K562 (cell line): ENCODE measurements at regions of chr7 and their contacts with region 1.

Region 1: DNA sequence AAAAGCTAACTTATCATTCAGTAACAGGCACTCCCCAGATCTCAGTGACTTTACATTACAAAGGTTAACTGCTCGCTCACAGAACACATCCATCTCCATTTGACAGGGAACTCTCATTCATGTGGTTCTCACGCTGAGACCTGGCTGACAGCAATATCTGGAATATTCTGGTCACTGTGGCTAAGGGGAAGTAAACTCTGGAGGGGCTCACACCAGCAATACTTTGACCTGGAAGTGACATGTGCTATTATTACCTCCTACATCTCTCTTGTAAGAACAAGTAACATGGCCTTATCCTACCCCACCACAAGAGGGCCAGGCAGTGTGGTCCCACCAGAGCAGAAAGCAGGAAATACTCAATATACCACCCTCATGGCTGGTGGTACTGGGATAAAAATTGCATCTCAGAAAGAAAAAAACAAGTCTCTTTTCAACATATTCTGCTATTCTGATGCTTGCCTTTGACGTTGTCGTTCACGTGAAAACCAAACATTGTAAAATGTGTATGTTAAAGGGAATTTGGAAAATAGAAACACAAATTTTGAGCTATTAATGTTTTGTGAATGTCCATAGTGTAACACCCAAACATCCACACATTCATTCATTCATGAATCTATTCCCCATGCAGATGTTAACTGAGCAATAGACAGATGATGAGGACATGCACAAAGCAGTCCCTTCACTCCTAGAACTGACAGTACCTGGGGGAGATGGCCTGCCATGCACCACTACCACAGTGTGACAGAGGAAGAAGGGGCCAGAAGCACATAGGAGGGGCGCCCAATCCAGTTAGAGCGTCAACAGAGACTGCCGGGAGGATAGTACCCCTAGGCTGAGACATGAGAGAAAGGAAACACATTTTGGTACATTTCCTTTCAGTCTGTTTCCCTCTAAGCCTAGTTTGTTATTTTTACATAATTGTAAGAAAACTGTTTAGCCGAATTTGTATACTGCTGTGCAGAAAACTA is 166.0 kb upstream of the SP4 start:
- DNase-seq: peak; percentile 22 to 56 (median 32)
- ATAC-seq: peak; percentile 98
- H3K4me3 ChIP-seq: no peak overlapping the region
- H3K27ac ChIP-seq: no peak overlapping the region
- H3K4me1 ChIP-seq: no peaks in the 10 kb centered on the region
- H3K27me3 ChIP-seq: no peaks in the 10 kb centered on the region
- CTCF ChIP-seq: peak; percentile 66 to 71 (median 67)
- EP300 ChIP-seq: no peak
- POLR2A ChIP-seq: no peak
- RAD21 ChIP-seq: peak; percentile 41 to 72; a peak in 3 of 4 replicates

Region 2: DNA sequence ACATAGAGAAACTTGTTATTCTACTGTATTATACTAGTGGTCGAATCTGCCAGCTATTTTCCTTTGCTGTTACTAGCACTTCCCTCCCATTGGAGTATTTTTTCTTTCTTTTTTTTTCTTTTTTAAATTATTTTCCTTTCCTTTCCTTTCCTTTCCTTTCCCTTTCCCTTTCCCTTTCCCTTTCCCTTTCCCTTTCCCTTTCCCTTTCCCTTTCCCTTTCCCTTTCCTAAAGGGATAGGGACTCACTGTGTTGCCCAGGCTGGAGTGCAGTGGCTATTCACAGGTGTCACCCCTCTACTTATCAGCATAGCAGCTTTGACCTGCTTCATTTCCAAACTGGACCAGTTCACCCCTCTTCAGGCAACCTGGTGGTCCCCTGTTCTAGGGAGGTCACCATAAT is 46.6 kb before region 1 on chr7:
- CTCF ChIA-PET with region 1: no interaction called
- POLR2A ChIA-PET with region 1: no interaction called
- in situ Hi-C with region 1: no loop called
- intact Hi-C with region 1: no loop called
- DNase-seq: no peak
- ATAC-seq: no peak
- H3K4me3 ChIP-seq: no peak overlapping the region
- H3K27ac ChIP-seq: no peak overlapping the region
- H3K4me1 ChIP-seq: no peaks in the 10 kb centered on the region
- H3K27me3 ChIP-seq: peaks cover 0 to 2% of the 10 kb centered on the region in 2 experiments; a peak in 2 of 5 replicates
- CTCF ChIP-seq: no peak
- EP300 ChIP-seq: no peak
- POLR2A ChIP-seq: no peak
- RAD21 ChIP-seq: no peak

Region 3: DNA sequence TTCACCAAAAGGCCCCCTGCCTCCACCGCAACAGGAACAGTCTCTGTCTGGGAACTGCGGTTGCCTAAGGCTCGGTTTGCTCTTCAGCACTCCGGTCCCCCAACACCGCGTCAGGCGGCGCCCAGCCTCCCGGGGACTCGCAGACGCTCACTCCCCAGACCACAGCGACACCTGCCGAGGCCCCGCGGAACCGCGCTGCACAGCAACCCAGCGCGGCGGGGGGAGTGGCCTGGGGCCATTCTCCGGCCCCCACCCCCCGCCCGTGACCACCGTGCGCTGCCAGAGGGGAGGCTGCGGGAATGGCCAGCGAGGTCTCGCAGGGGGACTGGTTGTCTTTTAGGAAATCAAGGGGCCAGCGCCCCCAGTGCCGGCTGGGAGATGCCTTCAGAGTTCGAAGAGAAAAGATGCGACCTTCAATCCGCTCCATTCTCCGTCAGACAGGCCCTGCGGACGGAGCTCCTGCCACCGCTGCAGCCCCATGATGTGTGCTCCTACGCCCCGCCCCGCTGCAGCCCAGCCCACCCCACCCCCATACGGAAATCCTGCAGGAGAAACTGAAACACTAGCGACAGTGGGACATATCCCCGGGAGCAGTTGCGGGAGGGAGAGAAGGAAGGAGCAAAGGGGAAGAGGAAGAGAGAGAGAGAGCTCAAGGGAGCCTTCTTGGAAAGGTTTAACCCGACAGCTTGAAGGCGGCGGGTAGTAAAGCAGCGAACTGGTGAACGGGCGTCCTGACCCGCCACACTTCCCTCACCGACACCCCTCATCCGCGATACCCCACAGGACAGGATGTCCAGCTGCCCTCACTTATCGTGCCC is 821.2 kb after region 1 on chr7:
- CTCF ChIA-PET with region 1: no interaction called
- POLR2A ChIA-PET with region 1: no interaction called
- in situ Hi-C with region 1: no loop called
- intact Hi-C with region 1: loop called (anchors 10 kb)
- DNase-seq: peak; percentile 80 to 82 (median 82)
- ATAC-seq: peak; percentile 100
- H3K4me3 ChIP-seq: peak overlapping the region; percentile 46
- H3K27ac ChIP-seq: no peak overlapping the region; the same call in 2 of the 3 replicates
- H3K4me1 ChIP-seq: peaks cover 9 to 14% of the 10 kb centered on the region in 2 experiments; a peak in 3 of 5 replicates
- H3K27me3 ChIP-seq: peaks cover 3 to 16% of the 10 kb centered on the region in 2 experiments; a peak in 2 of 5 replicates
- CTCF ChIP-seq: peak; percentile 89 to 93 (median 92)
- EP300 ChIP-seq: no peak
- POLR2A ChIP-seq: no peak
- RAD21 ChIP-seq: peak; percentile 80 to 84